ENCODE measurements at regions of chr4 and their contacts with region 1.

Region 1: DNA sequence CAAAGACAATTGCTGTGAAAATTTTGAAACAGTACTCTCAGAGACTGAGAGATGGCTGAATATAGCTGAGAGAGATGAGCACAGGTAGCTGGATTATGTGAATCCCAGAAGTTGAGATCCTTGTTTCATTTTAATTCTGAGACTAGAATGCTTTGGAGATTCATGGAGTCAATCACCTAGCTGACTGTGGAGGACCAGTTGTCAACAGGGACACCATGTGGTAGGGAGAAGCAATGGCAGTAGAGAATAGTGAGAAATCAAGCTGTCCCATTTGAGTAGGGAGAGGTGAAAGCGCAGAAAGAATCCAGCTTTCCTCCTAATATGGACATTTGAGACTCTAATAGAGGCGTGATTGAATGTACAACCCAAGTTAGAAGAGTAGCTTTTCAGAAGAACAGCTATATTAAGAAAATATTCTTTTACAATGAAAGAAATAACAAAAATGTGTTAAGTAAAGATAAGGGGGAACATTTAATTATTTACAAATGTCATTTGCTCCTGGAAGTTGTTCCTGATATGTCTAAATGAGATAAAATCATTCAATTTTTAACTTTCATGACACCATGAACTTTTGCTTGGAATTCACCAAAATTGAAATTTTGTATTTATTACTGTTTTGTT is 30.3 kb upstream of the GLRB start:
- DNase-seq: peak; percentile 53
- H3K4me3 ChIP-seq: no peak overlapping the region
- H3K27ac ChIP-seq: no peak overlapping the region
- H3K4me1 ChIP-seq: 0 out of 4 replicates have a peak, but pooled peaks cover 0 to 12% of the 10 kb centered on the region in 2 experiments
- H3K27me3 ChIP-seq: no peaks in the 10 kb centered on the region
- CTCF ChIP-seq: peak; percentile 85
- EP300 ChIP-seq: no peak
- RAD21 ChIP-seq: peak; percentile 83

Region 2: DNA sequence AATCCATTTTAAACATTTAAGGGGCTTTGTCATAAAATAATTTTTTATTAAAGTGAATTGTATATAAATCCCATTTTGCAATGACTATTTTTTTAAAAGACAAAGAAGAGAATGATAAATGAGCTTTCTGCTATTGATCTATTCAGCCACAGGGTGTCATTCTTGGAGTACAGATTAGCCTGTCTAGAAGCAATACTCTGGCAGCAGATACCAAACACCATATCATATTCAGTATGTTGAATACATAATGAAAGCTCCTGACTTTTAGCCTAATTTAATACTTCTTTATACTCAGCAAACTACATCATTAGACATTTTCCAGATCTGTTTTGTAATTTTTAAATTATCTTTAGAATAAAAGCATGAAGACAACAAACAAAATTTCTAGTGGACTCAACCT is 570.3 kb before region 1 on chr4:
- CTCF ChIA-PET with region 1: interaction called, 13 read pairs
- POLR2A ChIA-PET with region 1: no interaction called
- DNase-seq: peak; percentile 21
- H3K4me3 ChIP-seq: no peak overlapping the region
- H3K27ac ChIP-seq: peak overlapping the region; percentile 79 to 89; a peak in 3 of 4 replicates
- H3K4me1 ChIP-seq: peaks cover 0 to 15% of the 10 kb centered on the region in 2 experiments; a peak in 1 of 4 replicates
- H3K27me3 ChIP-seq: no peaks in the 10 kb centered on the region
- CTCF ChIP-seq: peak; percentile 85
- EP300 ChIP-seq: no peak
- RAD21 ChIP-seq: peak; percentile 79

Region 3: DNA sequence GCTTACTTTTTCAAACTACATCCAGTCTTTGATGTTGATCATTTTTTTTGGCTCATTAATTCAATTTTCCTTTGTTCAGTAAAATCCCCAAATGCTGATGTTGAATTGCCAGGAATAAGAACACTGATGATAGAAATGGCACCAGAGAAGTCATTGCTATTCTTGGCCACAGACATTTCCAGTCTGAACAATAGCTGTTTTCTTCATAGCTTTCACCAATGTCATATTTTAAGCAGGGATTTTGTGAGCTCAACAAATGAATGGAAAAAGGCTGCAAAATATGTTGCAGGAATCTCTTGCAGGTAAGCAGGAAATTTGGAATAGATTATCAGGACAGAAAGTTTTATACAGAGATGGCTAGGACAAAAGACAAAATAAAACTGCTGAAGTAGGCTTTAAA is 10.1 kb before region 1 on chr4:
- CTCF ChIA-PET with region 1: interaction called, 12 read pairs
- POLR2A ChIA-PET with region 1: no interaction called
- DNase-seq: no peak
- H3K4me3 ChIP-seq: no peak overlapping the region
- H3K27ac ChIP-seq: no peak overlapping the region
- H3K4me1 ChIP-seq: no peaks in the 10 kb centered on the region; a peak in 1 of 4 replicates
- H3K27me3 ChIP-seq: no peaks in the 10 kb centered on the region
- CTCF ChIP-seq: no peak
- EP300 ChIP-seq: no peak
- RAD21 ChIP-seq: no peak

Measured in SK-N-SH (cell line).